WTC11 (cell line): ENCODE measurements at regions of chr17 and their contacts with region 1.

Region 1: GRCh38 chr17:60599620-60600489 is at the start of gene PPM1D:
- DNase-seq: peak; percentile 99
- ATAC-seq: peak; percentile 93
- H3K4me3 Mint-ChIP-seq: peak within 1 kb of the TSS; percentile 97
- H3K27ac Mint-ChIP-seq: peak within 1 kb of the TSS; percentile 100
- H3K4me1 Mint-ChIP-seq: peaks cover 22% of the 10 kb centered on the region
- H3K27me3 Mint-ChIP-seq: no peaks in the 10 kb centered on the region
- CTCF ChIP-seq: no peak
- total RNA-seq, gene PPM1D: 16.5 to 20.4 TPM (median 17.0 TPM) in 3 replicates

Region 2: GRCh38 chr17:60568561-60568960 is 31.3 kb before region 1 on chr17:
- CTCF ChIA-PET with region 1: interaction called, 20 read pairs
- POLR2A ChIA-PET with region 1: interaction called, 6 read pairs
- DNase-seq: no peak
- ATAC-seq: no peak
- H3K4me3 Mint-ChIP-seq: no peak overlapping the region
- H3K27ac Mint-ChIP-seq: no peak overlapping the region
- H3K4me1 Mint-ChIP-seq: no peaks in the 10 kb centered on the region
- H3K27me3 Mint-ChIP-seq: no peaks in the 10 kb centered on the region
- CTCF ChIP-seq: no peak

Region 3: GRCh38 chr17:60586288-60586974 is 13.4 kb before region 1 on chr17:
- CTCF ChIA-PET with region 1: interaction called, 11 read pairs
- POLR2A ChIA-PET with region 1: interaction called, 17 read pairs
- DNase-seq: peak; percentile 43
- ATAC-seq: peak; percentile 82
- H3K4me3 Mint-ChIP-seq: no peak overlapping the region
- H3K27ac Mint-ChIP-seq: no peak overlapping the region
- H3K4me1 Mint-ChIP-seq: no peaks in the 10 kb centered on the region
- H3K27me3 Mint-ChIP-seq: no peaks in the 10 kb centered on the region; the same call in 1 of the 2 replicates
- CTCF ChIP-seq: no peak

Region 4: DNA sequence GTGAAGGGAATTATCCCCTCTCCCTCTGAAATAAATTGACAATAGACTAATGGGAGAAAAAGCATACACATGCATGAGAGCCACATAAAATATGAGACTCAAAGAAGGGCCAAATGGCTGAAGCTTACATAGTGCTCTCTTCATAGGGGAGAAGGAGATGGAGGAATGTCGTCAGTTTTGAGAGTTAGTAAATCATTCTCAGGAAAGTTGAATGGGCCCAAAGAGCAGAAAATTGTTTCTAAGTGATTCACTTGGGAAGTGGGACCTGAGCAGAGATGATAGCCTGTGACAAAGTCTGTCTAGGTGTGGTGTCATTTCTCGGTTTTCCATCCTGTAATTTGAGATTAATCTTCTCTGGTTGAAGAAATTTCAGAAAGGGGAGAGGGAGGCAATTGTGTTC is 112.8 kb after region 1 on chr17:
- CTCF ChIA-PET with region 1: no interaction called
- POLR2A ChIA-PET with region 1: no interaction called
- DNase-seq: no peak
- ATAC-seq: no peak
- H3K4me3 Mint-ChIP-seq: no peak overlapping the region
- H3K27ac Mint-ChIP-seq: no peak overlapping the region
- H3K4me1 Mint-ChIP-seq: no peaks in the 10 kb centered on the region
- H3K27me3 Mint-ChIP-seq: no peaks in the 10 kb centered on the region; the same call in 1 of the 2 replicates
- CTCF ChIP-seq: no peak